ENCODE measurements at regions of chr10 and their contacts with region 1.

Region 1: GRCh38 chr10:110918643-110919363 is at the start of gene BBIP1:
- DNase-seq: peak in 1 of 2 experiments; percentile 98
- H3K4me3 ChIP-seq: peak within 1 kb of the TSS; percentile 92
- H3K27ac ChIP-seq: peak within 1 kb of the TSS; percentile 83
- H3K4me1 ChIP-seq: peaks cover 24% of the 10 kb centered on the region
- H3K27me3 ChIP-seq: no peaks in the 10 kb centered on the region
- CTCF ChIP-seq: no peak
- total RNA-seq, gene BBIP1: 8.5 and 14.9 TPM in 2 replicates

Region 2: GRCh38 chr10:110567201-110568054 is 351.4 kb before region 1 on chr10 and contains the start of gene SMC3:
- CTCF ChIA-PET with region 1: no interaction called
- POLR2A ChIA-PET with region 1: interaction called, 12 read pairs
- intact Hi-C with region 1: no loop called
- DNase-seq: peak; percentile 74 to 82
- H3K4me3 ChIP-seq: peak within 1 kb of the TSS; percentile 90
- H3K27ac ChIP-seq: peak within 1 kb of the TSS; percentile 86
- H3K4me1 ChIP-seq: peaks cover 7% of the 10 kb centered on the region
- H3K27me3 ChIP-seq: no peaks in the 10 kb centered on the region
- CTCF ChIP-seq: no peak
- total RNA-seq, gene SMC3: 22.1 and 31.2 TPM in 2 replicates

Region 3: DNA sequence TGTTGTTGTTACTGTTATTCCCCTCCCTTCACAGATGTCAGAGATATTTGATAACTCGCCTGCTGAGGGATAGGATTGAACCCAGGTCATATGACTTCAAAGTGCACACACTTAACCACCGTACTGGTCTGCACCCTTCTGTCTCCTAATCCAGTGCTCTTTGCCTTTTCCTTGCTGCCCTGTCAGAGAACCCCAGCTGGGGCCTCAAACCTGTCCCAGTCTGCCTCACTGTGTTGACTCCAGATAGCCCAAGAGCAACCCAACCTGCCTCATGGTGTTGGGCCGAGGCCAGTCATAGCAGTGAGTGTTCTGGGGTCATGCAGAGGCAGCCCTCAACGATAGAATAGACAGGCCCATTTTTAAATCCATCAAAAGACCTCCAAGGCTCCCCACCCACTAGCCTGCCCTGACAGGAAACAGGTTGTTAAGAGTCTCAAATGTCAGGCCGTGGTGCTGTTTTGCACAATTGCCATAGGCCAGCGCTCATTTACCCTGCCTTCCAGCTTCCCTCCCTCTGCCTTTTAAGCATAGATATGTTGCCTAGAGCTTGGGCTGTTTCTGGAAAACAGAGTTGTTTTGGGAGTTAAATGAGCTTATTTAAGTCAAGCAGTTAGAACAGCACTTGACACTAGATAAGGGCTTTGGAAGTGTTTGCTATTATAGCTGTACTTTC is 84.0 kb before region 1 on chr10:
- CTCF ChIA-PET with region 1: no interaction called
- POLR2A ChIA-PET with region 1: interaction called, 10 read pairs
- intact Hi-C with region 1: no loop called
- DNase-seq: no peak
- H3K4me3 ChIP-seq: no peak overlapping the region
- H3K27ac ChIP-seq: no peak overlapping the region
- H3K4me1 ChIP-seq: no peaks in the 10 kb centered on the region
- H3K27me3 ChIP-seq: no peaks in the 10 kb centered on the region
- CTCF ChIP-seq: no peak

Region 4: DNA sequence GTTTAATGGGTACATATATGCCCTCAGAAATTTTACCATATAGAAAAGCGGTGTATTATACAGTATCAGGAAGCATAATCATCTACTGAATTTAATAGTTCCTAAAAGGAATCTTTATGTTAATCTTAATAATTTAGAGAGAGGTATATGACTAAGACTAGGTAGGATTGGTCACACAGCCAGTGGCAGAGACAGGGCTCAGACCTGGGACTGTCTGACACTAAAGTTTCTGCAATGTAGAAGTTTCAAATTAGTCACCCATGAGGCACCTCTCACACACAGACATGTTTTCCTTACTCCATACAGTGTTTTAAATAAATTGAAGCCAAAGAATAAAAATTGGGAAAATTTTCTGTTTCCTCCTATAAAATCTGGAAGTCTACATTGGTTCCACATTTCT is 85.2 kb after region 1 on chr10:
- CTCF ChIA-PET with region 1: no interaction called
- POLR2A ChIA-PET with region 1: interaction called, 14 read pairs
- intact Hi-C with region 1: no loop called
- DNase-seq: no peak
- H3K4me3 ChIP-seq: no peak overlapping the region
- H3K27ac ChIP-seq: no peak overlapping the region
- H3K4me1 ChIP-seq: no peaks in the 10 kb centered on the region
- H3K27me3 ChIP-seq: no peaks in the 10 kb centered on the region
- CTCF ChIP-seq: no peak

Measured in PC-9 (cell line).